ENCODE measurements at regions of chr14 and their contacts with region 1.

Region 1: DNA sequence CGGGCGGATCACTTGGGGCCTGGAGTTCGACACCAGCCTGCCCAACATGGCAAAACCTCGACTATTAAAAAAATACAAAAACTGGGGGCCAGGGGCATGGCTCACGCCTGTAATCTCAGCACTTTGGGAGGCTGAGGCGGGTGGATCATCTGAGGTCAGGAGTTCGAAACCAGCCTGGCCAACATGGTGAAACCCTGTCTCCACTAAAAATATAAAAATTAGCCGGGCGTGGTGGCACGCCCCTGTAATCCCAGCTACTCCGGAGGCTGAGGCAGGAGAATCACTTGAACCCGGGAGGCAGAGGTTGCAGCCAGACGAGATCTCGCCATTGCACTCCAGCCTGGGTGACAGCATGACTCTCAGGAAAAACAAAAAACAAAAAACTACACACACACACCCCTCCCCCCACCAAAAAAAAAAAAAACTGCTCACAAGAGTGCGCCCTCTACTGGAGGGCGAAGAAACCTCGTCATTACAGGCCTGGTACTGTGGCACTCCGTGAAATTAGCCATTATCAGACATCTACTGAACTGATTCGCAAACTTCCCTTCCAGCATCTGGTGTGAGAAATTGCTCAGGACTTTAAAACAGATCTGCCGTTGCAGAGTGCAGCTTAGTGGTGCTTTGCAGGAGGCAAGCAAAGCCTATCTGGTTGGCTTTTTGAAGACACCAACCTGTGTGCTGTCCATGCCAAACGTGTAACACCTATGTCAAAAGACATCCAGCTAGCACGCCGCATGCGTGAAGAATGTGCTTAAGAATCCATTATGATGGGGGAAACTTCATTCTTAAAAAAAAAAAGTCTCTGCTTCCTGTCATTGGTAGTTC is 7.7 kb downstream of the PPP1R3E start:
- DNase-seq: no peak
- H3K4me3 ChIP-seq: no peak overlapping the region
- CTCF ChIP-seq: peak; percentile 61

Region 2: DNA sequence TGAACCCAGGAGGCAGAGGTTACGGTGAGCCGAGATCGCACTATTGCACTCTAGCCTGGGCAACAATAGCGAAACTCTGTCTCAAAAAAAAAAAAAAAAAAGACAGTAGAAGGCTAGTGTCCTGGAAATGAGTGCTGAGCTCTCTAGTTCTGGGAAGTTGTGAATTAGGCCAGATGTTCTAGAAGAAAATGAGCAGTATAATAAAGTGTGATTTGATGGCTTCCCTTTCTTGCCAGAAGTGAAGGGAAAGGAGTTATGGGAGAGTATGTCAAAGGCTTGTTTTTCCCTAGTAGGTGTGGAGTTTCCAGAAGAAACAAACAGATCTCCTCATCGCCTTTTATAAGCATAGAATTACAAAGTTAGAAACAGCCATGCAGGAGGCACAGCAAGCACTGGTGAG is 36.7 kb before region 1 on chr14:
- CTCF ChIA-PET with region 1: interaction called, 25 read pairs
- POLR2A ChIA-PET with region 1: no interaction called
- DNase-seq: no peak
- H3K4me3 ChIP-seq: no peak overlapping the region
- CTCF ChIP-seq: no peak

Region 3: GRCh38 chr14:23269193-23269592 is 25.8 kb before region 1 on chr14:
- CTCF ChIA-PET with region 1: interaction called, 25 read pairs
- POLR2A ChIA-PET with region 1: no interaction called
- DNase-seq: no peak
- H3K4me3 ChIP-seq: no peak overlapping the region
- CTCF ChIP-seq: no peak

Region 4: GRCh38 chr14:23275412-23275811 is 19.5 kb before region 1 on chr14:
- CTCF ChIA-PET with region 1: interaction called, 300 read pairs
- POLR2A ChIA-PET with region 1: no interaction called
- DNase-seq: no peak
- H3K4me3 ChIP-seq: no peak overlapping the region
- CTCF ChIP-seq: no peak